WTC11 (cell line): ENCODE measurements at regions of chr6 and their contacts with region 1.

Region 1: DNA sequence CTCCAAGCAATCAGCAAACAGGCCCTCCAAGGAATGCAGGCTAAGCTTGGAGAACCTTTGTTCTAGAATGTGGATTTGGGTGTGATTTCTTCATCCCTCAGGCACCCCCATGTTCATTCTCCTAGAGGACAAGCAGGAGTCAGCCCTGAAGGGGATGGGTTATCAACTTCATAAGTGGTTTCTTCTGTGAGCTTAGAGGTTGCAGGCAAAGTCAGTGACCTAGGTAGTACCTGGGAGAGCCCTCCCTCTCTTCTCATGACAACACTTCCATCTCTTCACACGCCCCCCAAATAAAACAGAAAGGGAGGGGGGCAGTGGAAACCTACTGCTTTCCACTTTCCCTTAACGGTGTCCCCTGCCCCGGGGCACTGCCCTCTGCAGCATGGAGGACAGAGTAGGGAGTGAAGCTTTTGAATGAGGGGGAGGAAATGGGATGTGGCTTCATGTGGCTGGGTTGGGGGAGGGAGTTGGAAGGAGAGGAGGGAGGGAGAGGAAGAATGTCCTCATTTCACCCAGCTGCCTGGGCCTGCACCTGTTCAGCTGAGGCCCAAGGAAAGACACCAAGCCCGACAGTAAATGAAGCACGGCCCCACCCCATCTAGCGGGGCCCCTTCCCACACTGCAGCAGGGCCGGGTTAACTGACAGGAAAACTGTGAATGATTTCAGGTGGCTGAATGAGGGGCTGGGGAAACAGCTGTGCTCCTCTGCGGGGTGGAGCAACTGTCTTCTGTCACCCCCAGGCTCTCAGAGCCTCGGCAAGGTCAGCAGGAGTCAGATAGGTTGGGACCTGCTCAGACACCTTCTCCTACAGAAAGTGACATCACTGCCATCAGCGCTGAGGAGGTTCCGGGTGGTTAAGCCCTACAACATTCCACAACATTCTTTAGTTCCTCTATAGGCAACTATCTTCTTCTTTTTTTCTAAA is 40.1 kb upstream of the TAF8 start:
- DNase-seq: peak; percentile 43
- ATAC-seq: peak; percentile 96
- H3K4me3 Mint-ChIP-seq: no peak overlapping the region
- H3K27ac Mint-ChIP-seq: no peak overlapping the region; the same call in 1 of the 2 replicates
- H3K4me1 Mint-ChIP-seq: peaks cover 28% of the 10 kb centered on the region
- H3K27me3 Mint-ChIP-seq: no peaks in the 10 kb centered on the region
- CTCF ChIP-seq: no peak

Region 2: GRCh38 chr6:41936073-41936837 is 74.0 kb before region 1 on chr6:
- CTCF ChIA-PET with region 1: interaction called, 11 read pairs
- POLR2A ChIA-PET with region 1: no interaction called
- DNase-seq: peak; percentile 61
- ATAC-seq: peak; percentile 49
- H3K4me3 Mint-ChIP-seq: no peak overlapping the region
- H3K27ac Mint-ChIP-seq: 0 out of 2 replicates have a peak overlapping the region, but pooled peaks have one; percentile 78
- H3K4me1 Mint-ChIP-seq: peaks cover 26% of the 10 kb centered on the region
- H3K27me3 Mint-ChIP-seq: no peaks in the 10 kb centered on the region
- CTCF ChIP-seq: peak; percentile 77

Region 3: GRCh38 chr6:42028234-42029061 is 18.2 kb after region 1 on chr6:
- CTCF ChIA-PET with region 1: no interaction called
- POLR2A ChIA-PET with region 1: no interaction called
- DNase-seq: no peak
- ATAC-seq: no peak
- H3K4me3 Mint-ChIP-seq: no peak overlapping the region
- H3K27ac Mint-ChIP-seq: peak overlapping the region; percentile 75
- H3K4me1 Mint-ChIP-seq: peaks cover 12% of the 10 kb centered on the region
- H3K27me3 Mint-ChIP-seq: peaks cover 5% of the 10 kb centered on the region; the same call in 1 of the 2 replicates
- CTCF ChIP-seq: no peak